ENCODE measurements at regions of chr19 and their contacts with region 1.

Region 1: GRCh38 chr19:32238076-32238475 is 107.3 kb upstream of the ZNF507 start:
- DNase-seq: no peak
- H3K4me3 ChIP-seq: no peak overlapping the region
- H3K27ac ChIP-seq: no peak overlapping the region
- H3K4me1 ChIP-seq: no peaks in the 10 kb centered on the region
- H3K27me3 ChIP-seq: no peaks in the 10 kb centered on the region
- CTCF ChIP-seq: no peak
- EP300 ChIP-seq: no peak
- POLR2A ChIP-seq: no peak

Region 2: DNA sequence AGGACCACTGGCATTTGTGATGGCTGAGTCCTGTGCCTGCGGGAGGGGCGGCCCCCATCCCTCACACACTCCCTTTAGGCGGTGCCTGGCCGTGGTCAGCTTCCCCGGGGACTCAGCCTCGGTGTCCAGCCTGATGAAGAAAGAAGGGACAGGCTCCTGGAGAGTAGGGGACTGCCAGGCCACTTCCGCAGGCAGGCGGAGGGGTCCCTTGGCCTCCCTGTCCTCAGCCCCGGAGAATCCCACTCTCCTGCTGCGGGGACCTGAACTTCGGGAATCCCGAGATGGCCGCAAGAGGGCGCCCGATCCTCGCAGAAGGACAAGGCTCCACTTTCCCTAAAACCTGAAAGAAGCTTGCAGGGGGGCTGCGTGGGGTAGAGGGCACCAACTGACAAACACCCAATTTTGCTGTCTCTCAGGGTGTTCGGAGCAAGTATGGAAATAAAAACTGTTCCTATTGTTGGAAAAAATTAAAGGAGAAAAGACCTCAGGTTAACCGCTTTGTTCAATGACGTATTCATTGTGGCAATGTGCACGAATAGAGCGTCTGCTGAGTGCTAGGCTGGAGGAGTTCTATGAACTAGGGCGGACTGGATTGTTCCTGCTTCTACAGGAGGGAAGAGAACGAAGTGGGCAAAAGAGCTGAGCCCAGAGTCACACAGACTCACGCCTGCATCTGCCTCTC is 1568.6 kb before region 1 on chr19:
- in situ Hi-C with region 1: loop called in 1 of 4 experiments (anchors 10 kb)
- intact Hi-C with region 1: no loop called
- DNase-seq: peak; percentile 52
- H3K4me3 ChIP-seq: no peak overlapping the region
- H3K27ac ChIP-seq: no peak overlapping the region
- H3K4me1 ChIP-seq: peaks cover 0 to 11% (median 0%) of the 10 kb centered on the region in 4 donors
- H3K27me3 ChIP-seq: peaks cover 19% of the 10 kb centered on the region
- CTCF ChIP-seq: peak; percentile 55 to 75 (median 73)
- EP300 ChIP-seq: no peak
- POLR2A ChIP-seq: no peak

Region 3: DNA sequence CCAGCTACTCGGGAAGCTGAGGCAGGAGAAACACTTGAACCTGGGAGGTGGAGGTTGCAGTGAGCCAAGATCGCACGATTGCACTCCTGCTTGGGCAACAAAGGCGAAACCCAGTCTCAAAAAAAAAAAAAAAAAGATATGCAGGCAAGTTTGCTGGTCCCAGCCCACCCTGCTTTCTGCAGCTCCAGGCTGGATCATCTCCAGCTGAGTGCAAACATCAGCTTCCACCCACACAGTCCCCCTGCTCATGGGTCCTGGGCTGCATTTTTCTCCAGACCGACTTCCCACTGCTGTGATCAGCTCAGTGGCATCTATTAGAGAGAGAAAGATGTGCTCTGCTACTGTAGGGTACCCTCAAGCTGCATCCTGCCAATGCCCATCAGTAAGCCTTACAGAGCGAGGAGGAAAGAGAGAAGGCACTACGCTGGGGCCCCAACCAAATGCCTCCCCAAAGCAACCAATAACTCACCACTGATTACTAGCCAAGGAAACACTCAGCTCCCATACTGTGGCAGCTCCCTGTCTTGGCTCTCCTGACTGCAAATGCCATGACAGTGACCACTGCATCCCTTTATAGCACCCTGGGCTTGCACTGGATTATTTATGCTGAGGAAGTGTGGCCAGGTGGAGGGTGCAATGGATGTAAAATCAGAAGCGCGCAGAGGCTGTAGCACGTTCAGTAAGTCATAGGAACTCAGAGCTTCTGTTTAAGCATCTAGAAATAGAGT is 63.5 kb before region 1 on chr19:
- in situ Hi-C with region 1: no loop called
- intact Hi-C with region 1: no loop called
- DNase-seq: no peak
- H3K4me3 ChIP-seq: no peak overlapping the region
- H3K27ac ChIP-seq: no peak overlapping the region
- H3K4me1 ChIP-seq: no peaks in the 10 kb centered on the region
- H3K27me3 ChIP-seq: peaks cover 7% of the 10 kb centered on the region
- CTCF ChIP-seq: no peak
- EP300 ChIP-seq: no peak
- POLR2A ChIP-seq: no peak

Region 4: GRCh38 chr19:32189956-32190706 is 47.9 kb before region 1 on chr19:
- in situ Hi-C with region 1: no loop called
- intact Hi-C with region 1: no loop called
- DNase-seq: no peak
- H3K4me3 ChIP-seq: no peak overlapping the region
- H3K27ac ChIP-seq: no peak overlapping the region
- H3K4me1 ChIP-seq: no peaks in the 10 kb centered on the region
- H3K27me3 ChIP-seq: no peaks in the 10 kb centered on the region
- CTCF ChIP-seq: no peak
- EP300 ChIP-seq: no peak
- POLR2A ChIP-seq: no peak

Region 5: DNA sequence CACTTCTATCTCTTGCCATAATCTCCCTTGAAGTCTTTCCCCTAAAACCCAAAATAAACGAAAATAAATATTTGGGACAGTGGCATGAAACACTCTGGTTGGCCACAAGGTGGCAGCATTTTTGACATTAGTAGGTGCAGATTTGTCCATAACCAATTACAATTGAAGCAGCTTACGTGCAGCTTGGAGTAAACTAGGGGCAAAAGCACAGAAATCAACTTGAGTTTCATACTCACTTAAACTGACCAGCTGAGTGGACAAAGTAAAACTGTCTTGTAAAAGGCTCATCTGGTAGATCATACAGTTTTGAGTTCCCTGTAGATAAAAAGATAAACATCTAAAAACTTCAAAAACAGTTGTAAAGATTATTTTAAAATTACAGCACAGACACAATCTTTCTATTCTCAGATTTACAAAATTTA is 361.7 kb after region 1 on chr19:
- in situ Hi-C with region 1: no loop called
- intact Hi-C with region 1: no loop called
- DNase-seq: peak; percentile 25
- H3K4me3 ChIP-seq: no peak overlapping the region
- H3K27ac ChIP-seq: no peak overlapping the region
- H3K4me1 ChIP-seq: no peaks in the 10 kb centered on the region
- H3K27me3 ChIP-seq: no peaks in the 10 kb centered on the region
- CTCF ChIP-seq: peak; percentile 73 to 87 (median 78)
- EP300 ChIP-seq: no peak
- POLR2A ChIP-seq: no peak

Region 6: GRCh38 chr19:33039108-33039599 is 801.1 kb after region 1 on chr19:
- in situ Hi-C with region 1: no loop called
- intact Hi-C with region 1: loop called (anchors 5 kb)
- DNase-seq: no peak
- H3K4me3 ChIP-seq: no peak overlapping the region
- H3K27ac ChIP-seq: peak overlapping the region in 3 of 4 donors; percentile 85 to 87 (median 87)
- H3K4me1 ChIP-seq: peaks cover 7 to 39% (median 29%) of the 10 kb centered on the region in 4 donors
- H3K27me3 ChIP-seq: no peaks in the 10 kb centered on the region
- CTCF ChIP-seq: no peak
- EP300 ChIP-seq: no peak
- POLR2A ChIP-seq: no peak

Measured in transverse colon (tissue), 4 donors.